Testis (tissue), 5 donors: ENCODE measurements at regions of chr7 and their contacts with region 1.

Region 1: DNA sequence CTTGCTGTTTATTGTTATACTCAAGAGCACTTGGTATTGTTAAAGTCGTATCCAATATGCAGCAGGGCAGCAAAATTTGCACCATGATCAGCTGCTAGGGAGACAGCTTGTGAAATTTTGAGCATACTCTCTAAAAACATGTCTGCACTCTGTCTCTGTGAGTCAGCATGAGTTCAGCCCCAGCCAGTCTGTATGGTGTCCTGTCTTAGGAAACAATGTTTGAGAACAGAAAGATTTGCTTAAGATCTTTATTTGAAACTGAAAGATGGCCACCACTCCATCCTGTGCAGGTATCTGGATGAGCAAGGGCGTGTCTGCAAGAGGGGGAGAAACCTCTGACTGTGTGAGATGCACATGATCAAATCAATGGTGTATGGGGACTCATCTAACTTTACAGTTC is 97.1 kb downstream of the GNAI1 start:
- DNase-seq: no peak
- H3K4me3 ChIP-seq: no peak overlapping the region
- H3K27ac ChIP-seq: no peak overlapping the region
- H3K4me1 ChIP-seq: peaks cover under 1% of the 10 kb centered on the region
- H3K27me3 ChIP-seq: no peaks in the 10 kb centered on the region
- CTCF ChIP-seq: no peak
- POLR2A ChIP-seq: no peak

Region 2: GRCh38 chr7:80294346-80294745 is 62.6 kb after region 1 on chr7:
- intact Hi-C with region 1: no loop called
- DNase-seq: no peak
- H3K4me3 ChIP-seq: no peak overlapping the region
- H3K27ac ChIP-seq: no peak overlapping the region
- H3K4me1 ChIP-seq: no peaks in the 10 kb centered on the region
- H3K27me3 ChIP-seq: no peaks in the 10 kb centered on the region
- CTCF ChIP-seq: no peak
- POLR2A ChIP-seq: no peak

Region 3: DNA sequence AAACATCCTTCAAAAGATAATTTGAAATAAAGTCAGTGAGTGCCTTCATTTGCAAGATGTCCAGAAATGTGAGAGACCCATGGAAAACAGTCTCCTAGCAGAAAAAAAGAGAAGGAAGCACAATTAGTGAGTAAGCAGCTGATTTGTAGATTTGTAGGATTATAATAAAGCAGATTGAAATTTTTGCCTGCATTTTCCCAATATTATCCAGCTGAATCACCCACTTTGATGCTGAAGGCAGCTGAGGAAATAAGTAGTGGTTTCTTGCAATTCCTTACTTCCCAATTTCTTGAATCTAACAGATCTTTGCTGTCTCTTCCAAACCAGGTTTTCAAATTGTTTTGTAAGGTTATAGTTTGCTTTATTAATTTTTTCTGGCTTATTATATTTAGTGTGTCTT is 98.7 kb after region 1 on chr7:
- intact Hi-C with region 1: loop called (anchors 5 kb)
- DNase-seq: no peak
- H3K4me3 ChIP-seq: no peak overlapping the region
- H3K27ac ChIP-seq: no peak overlapping the region
- H3K4me1 ChIP-seq: peaks cover 2% of the 10 kb centered on the region
- H3K27me3 ChIP-seq: no peaks in the 10 kb centered on the region
- CTCF ChIP-seq: no peak
- POLR2A ChIP-seq: no peak

Region 4: DNA sequence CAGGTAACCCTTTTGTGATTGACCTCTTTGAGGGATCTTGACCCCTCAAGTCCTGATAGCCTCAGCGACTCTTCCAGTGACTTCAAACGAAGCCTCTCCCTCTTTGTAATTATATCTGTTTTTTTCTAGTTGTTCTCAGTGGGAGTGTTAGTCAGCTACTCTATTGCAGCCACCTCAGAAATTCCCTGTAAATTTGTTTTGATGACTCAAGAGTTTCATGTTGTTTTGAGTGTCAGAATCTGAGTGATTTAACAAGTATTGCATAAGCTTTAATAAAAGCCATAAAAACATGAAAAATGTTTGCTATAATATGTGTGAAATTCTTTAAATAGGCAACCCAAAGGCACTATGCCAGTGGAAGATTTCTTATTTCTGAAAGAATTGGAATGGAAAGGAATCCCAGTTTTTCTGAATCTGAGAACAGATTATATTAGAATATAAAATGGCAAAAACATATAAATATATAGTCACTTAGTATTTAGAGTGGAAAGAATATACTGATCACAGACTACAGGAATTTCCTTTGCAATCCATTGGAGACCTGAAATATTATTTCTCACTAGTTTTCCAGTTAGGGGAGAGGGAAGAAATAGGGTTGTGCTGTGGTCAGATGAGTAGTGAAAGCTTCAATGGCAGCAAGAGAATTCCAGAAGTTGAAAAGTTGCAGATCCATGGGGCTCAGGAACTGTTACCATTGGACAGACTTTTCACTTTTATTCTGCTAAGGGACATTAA is 781.5 kb after region 1 on chr7:
- intact Hi-C with region 1: no loop called
- DNase-seq: no peak
- H3K4me3 ChIP-seq: no peak overlapping the region
- H3K27ac ChIP-seq: no peak overlapping the region
- H3K4me1 ChIP-seq: no peaks in the 10 kb centered on the region
- H3K27me3 ChIP-seq: no peaks in the 10 kb centered on the region
- CTCF ChIP-seq: no peak
- POLR2A ChIP-seq: no peak